ENCODE measurements at regions of chr5 and their contacts with region 1.

Region 1: DNA sequence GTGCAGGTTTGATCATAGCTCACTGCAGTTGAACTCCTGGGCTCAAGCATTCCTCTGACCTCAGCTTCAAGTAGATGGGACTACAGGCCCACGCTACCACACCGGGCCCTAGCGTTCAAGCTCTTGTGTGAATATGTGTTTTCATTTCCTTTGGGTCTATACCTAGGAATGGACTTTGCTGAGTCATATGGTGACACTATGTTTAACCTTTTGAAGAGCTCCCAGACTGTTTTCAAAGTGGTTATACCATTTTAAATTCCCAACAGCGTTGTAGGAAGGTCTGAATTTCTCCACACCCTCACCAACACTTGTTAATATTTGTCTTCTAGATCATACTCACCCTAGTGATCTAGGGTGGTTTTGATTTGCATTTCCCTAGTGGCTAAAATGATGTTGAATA is 33.5 kb downstream of the FAF2 start:
- DNase-seq: no peak
- ATAC-seq: no peak
- H3K4me3 Mint-ChIP-seq: no peak overlapping the region
- H3K27ac Mint-ChIP-seq: no peak overlapping the region
- H3K4me1 Mint-ChIP-seq: peaks cover 2% of the 10 kb centered on the region
- H3K27me3 Mint-ChIP-seq: no peaks in the 10 kb centered on the region
- CTCF ChIP-seq: no peak

Region 2: GRCh38 chr5:176501333-176501732 is 19.6 kb after region 1 on chr5:
- CTCF ChIA-PET with region 1: no interaction called
- POLR2A ChIA-PET with region 1: no interaction called
- intact Hi-C with region 1: no loop called
- DNase-seq: no peak
- ATAC-seq: no peak
- H3K4me3 Mint-ChIP-seq: no peak overlapping the region
- H3K27ac Mint-ChIP-seq: no peak overlapping the region
- H3K4me1 Mint-ChIP-seq: no peaks in the 10 kb centered on the region
- H3K27me3 Mint-ChIP-seq: no peaks in the 10 kb centered on the region
- CTCF ChIP-seq: no peak

Region 3: GRCh38 chr5:176712546-176713304 is 231.0 kb after region 1 on chr5:
- CTCF ChIA-PET with region 1: no interaction called
- POLR2A ChIA-PET with region 1: no interaction called
- intact Hi-C with region 1: no loop called
- DNase-seq: no peak
- ATAC-seq: no peak
- H3K4me3 Mint-ChIP-seq: no peak overlapping the region
- H3K27ac Mint-ChIP-seq: no peak overlapping the region
- H3K4me1 Mint-ChIP-seq: no peaks in the 10 kb centered on the region
- H3K27me3 Mint-ChIP-seq: peaks cover 37% of the 10 kb centered on the region
- CTCF ChIP-seq: no peak

Region 4: GRCh38 chr5:176916337-176916736 is 434.6 kb after region 1 on chr5:
- CTCF ChIA-PET with region 1: no interaction called
- POLR2A ChIA-PET with region 1: no interaction called
- intact Hi-C with region 1: loop called (anchors 5 kb)
- DNase-seq: no peak
- ATAC-seq: no peak
- H3K4me3 Mint-ChIP-seq: no peak overlapping the region
- H3K27ac Mint-ChIP-seq: no peak overlapping the region
- H3K4me1 Mint-ChIP-seq: no peaks in the 10 kb centered on the region
- H3K27me3 Mint-ChIP-seq: no peaks in the 10 kb centered on the region
- CTCF ChIP-seq: no peak